Activated naive CD4-positive, alpha-beta T cell treated with anti-CD3 and anti-CD28 coated beads for 36 hours (primary cell): ENCODE measurements at regions of chr1 and their contacts with region 1.

Region 1: DNA sequence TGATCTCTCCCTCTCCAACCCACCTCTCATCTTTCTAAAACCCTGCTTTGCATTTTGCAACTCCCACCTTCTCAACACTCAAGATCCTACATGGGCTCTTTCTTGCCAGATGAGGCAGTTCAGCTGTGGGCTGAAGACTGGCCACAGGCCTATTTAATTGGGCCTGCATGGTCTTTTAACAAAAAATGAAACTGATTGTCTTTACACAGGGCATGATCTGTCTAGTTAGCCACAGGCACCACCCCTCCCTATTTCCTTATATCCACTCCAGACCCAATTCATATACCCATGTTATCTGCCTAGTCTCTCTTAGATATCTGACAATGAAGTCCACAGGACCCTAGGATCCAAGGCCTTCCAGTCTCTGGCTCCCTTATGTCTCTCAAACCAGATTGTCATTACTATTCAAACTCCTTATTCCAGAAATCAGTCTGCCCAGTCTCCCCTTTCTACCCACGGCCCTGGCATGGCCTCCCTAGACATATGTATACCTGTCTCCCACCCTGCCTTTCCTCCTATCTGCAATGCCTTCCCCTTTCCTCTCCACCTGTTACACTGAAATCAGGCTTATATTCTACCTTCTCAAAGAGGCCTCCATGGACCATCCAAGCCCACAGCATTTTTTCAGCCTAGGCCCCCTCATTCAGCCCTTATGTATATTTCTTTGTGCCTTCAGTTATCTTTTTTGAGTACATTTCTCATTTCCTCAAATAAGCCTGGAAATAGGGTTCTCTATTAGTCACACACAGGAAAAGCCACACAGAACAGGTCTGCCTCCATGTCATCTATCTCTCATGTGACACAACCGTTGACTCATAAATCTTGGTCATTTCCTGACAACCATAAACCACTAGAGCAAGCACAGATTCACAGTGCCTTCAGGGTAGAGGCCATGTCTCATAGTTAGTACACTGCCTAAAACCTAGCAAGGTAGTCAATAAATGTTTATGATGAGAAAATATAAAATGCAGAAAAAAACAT is 39.0 kb downstream of the LPAR3 start:
- DNase-seq: peak; percentile 64
- H3K4me3 Mint-ChIP-seq: no peak overlapping the region
- H3K27ac Mint-ChIP-seq: peak overlapping the region; percentile 80
- H3K4me1 Mint-ChIP-seq: peaks cover 35% of the 10 kb centered on the region
- H3K27me3 Mint-ChIP-seq: no peaks in the 10 kb centered on the region

Region 2: GRCh38 chr1:84156210-84156621 is 697.8 kb before region 1 on chr1:
- CTCF ChIA-PET with region 1: no interaction called
- intact Hi-C with region 1: loop called (anchors 1 kb)
- DNase-seq: peak; percentile 19
- H3K4me3 Mint-ChIP-seq: peak overlapping the region; percentile 18
- H3K27ac Mint-ChIP-seq: peak overlapping the region; percentile 64
- H3K4me1 Mint-ChIP-seq: peaks cover 83% of the 10 kb centered on the region
- H3K27me3 Mint-ChIP-seq: no peaks in the 10 kb centered on the region

Region 3: DNA sequence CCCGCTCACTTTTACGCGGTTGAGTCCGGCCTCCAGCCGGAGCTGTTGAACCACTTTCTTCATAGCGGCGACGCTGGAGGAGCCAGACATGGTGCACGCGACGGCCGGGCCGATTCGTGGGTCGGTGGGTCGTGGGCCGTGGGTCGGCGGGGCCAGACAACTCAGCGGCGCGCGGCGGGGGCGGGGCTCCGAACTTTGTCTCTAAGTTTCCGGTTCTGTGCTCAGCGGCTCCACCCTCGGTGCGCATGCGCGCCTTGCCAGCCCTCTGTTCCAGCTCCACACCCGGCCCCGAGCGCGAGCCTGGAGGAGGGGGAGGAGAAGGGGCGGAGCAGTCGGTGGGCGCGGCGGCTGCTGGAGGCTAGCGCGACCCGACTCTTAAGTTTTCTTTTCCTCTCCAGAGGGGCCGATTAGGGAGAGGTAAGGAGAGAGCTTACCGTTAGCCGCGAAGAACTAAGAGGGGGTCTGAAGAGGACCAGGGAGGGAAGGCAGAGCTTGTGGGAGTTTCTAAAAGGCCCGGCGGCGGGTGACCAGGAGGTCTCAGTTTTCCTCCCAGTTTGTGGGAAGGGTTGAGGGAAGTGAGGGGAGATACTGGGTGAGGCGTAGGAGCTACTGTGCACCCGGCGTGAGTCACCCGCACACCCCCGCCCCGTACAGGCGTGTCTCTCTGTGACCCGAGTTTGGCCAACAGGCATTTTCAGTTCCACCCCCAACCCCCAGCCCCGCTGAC is 347.9 kb before region 1 on chr1 and contains the starts of genes GNG5 and SPATA1:
- CTCF ChIA-PET with region 1: no interaction called
- intact Hi-C with region 1: loop called (anchors 1 kb)
- DNase-seq: peak; percentile 97
- H3K4me3 Mint-ChIP-seq: peak within 1 kb of the TSS; percentile 100
- H3K27ac Mint-ChIP-seq: peak within 1 kb of the TSS; percentile 98
- H3K4me1 Mint-ChIP-seq: peaks cover 27% of the 10 kb centered on the region
- H3K27me3 Mint-ChIP-seq: no peaks in the 10 kb centered on the region
- total RNA-seq, gene GNG5: 128 to 132 TPM
- total RNA-seq, gene SPATA1: 1.8 to 2.7 TPM

Region 4: GRCh38 chr1:84892705-84893618 is 38.9 kb after region 1 on chr1 and contains the start of gene LPAR3:
- CTCF ChIA-PET with region 1: no interaction called
- intact Hi-C with region 1: loop called (anchors 1 kb)
- DNase-seq: peak; percentile 48
- H3K4me3 Mint-ChIP-seq: peak within 1 kb of the TSS; percentile 65
- H3K27ac Mint-ChIP-seq: no peak within 1 kb of the TSS
- H3K4me1 Mint-ChIP-seq: peaks cover 15% of the 10 kb centered on the region
- H3K27me3 Mint-ChIP-seq: peaks cover 26% of the 10 kb centered on the region
- total RNA-seq, gene LPAR3: 0.74 to 1.1 TPM

Region 5: GRCh38 chr1:85134576-85135395 is 280.8 kb after region 1 on chr1:
- CTCF ChIA-PET with region 1: no interaction called
- intact Hi-C with region 1: no loop called
- DNase-seq: no peak
- H3K4me3 Mint-ChIP-seq: no peak overlapping the region
- H3K27ac Mint-ChIP-seq: no peak overlapping the region
- H3K4me1 Mint-ChIP-seq: no peaks in the 10 kb centered on the region
- H3K27me3 Mint-ChIP-seq: no peaks in the 10 kb centered on the region